HEK293 (cell line): ENCODE measurements at regions of chr17 and their contacts with region 1.

Region 1: DNA sequence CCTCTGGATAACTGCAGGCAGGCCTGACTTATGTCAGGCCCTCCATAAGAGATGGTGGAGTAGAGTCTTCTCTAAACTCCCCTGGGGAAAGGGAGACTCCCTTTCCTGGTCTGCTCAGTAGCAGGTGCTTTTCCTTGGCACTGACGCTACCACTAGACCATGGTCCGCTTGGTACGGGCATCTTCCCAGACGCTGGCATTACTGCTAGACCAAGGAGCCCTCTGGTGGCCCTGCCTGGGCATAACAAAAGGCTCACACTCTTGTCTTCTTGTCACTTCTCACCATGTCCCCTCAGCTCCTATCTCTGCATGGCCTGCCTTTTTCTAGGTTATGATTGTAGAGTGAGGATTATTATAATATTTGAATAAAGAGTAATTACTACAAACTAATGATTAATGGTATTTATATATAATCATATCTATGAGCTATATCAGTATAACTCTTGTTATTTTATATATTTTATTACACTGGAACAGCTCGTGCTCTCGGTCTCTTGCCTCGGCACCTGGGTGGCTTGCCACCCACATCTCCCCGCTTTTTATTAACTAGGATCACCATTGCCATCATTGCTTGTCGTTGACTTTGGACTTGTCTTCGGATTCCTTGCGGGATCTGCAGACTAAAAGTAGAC is 59.8 kb upstream of the ARL4D start:
- H3K4me3 ChIP-seq: no peak overlapping the region
- H3K27ac ChIP-seq: no peak overlapping the region
- H3K4me1 ChIP-seq: 0 out of 2 replicates have a peak, but pooled peaks cover 3% of the 10 kb centered on the region
- CTCF ChIP-seq: peak; percentile 58

Region 2: DNA sequence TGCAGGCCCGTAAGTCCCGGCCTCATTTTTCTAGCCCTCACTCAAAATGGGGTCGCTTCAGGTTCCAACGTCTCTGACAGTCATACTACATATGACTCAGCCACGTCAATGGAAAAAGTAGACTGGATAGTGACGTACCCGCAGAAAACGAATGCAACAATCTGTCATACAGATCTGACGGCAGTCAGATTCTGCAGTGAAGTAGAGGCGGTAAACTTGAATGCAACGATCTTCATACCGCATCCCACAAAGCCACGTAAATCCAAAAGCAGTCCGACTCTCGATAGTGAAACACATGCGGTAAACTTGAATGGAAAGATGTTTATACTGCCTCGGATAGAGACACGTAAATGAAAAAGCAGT is 21.4 kb after region 1 on chr17:
- CTCF ChIA-PET with region 1: interaction called, 23 read pairs
- POLR2A ChIA-PET with region 1: interaction called, 3 read pairs
- H3K4me3 ChIP-seq: no peak overlapping the region
- H3K27ac ChIP-seq: no peak overlapping the region
- H3K4me1 ChIP-seq: no peaks in the 10 kb centered on the region
- CTCF ChIP-seq: no peak

Region 3: DNA sequence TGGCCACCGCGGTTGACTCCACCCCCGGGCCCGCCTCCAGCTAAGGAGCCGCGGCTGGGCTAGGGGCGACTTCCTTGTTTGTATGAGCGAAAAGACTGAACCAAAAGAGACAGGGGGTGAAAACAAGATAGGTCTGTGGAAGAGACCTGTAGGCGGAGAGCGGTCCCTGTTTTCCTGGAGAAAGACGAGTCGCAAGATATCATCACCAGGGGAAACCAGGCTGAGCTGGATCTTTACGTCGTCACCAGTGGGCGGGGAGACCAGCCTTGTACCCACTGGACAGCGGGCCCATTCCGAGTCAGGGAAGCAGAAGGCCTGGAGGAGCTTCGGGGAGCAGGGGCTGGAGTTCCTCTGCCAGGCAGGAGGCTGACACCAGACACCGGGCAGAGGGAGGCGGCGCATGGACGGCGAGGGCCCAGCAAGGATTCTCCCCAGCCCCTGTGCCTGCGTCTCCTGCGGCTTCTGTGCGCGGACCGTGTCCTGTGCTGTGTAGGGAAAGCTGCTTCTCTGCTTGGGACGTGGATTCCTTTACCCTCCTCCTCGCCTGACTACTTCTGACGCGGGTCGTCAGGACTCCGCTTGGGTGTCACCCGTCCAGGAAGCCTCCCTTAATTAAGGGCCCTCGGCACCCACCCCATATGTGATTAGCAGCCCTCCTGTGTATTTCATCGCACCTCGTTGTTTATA is 49.5 kb after region 1 on chr17:
- CTCF ChIA-PET with region 1: interaction called, 10 read pairs
- POLR2A ChIA-PET with region 1: interaction called, 7 read pairs
- H3K4me3 ChIP-seq: peak overlapping the region; percentile 61
- H3K27ac ChIP-seq: peak overlapping the region; percentile 86
- H3K4me1 ChIP-seq: no peaks in the 10 kb centered on the region
- CTCF ChIP-seq: no peak

Region 4: DNA sequence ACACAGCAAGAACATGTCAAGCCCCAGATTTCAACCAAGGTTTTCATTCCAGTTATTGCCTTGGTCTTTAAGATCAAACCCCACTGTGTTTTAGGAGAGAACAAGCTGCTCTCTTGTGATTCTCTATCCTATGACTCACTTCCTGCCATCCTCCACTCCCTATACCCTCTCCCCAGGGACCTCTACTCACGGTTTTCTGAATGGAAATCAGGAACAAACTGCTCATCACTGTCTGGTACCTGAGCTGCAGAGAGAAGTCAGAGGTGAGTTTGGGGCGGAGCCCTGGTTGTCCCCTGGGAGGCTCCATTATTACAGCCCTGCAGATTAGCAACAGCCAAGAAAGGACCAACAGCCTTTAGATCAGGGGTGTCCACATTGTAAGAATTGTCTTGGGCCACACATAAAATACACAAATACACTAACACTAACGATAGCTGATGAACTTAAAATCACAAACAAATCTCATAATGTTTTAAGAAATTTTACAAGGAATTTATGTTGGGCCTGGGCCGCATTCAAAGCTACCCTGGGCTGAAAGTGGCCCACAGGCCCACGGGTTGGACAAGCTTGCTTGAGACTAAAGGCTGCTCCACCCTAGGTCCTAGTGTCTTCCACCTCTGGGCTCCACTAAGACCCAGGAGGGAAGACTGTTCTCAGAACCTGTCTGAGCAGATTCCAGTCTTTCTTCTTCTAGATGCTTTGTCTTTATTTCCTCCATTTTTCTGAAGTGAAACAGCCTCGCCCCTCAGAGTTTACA is 197.4 kb after region 1 on chr17:
- CTCF ChIA-PET with region 1: no interaction called
- POLR2A ChIA-PET with region 1: no interaction called
- H3K4me3 ChIP-seq: no peak overlapping the region
- H3K27ac ChIP-seq: no peak overlapping the region
- H3K4me1 ChIP-seq: peaks cover 21% of the 10 kb centered on the region
- CTCF ChIP-seq: no peak